CD4-positive, alpha-beta memory T cell (primary cell): ENCODE measurements at regions of chr10 and their contacts with region 1.

Region 1: GRCh38 chr10:124741281-124741921 is 2.8 kb downstream of the FAM53B start:
- DNase-seq: peak; percentile 77 to 82 (median 79)
- H3K4me3 ChIP-seq: peak overlapping the region; percentile 57 to 79
- H3K4me3 Mint-ChIP-seq: peak overlapping the region; percentile 95 to 100 (median 98)
- H3K27ac ChIP-seq: peak overlapping the region; percentile 64
- H3K27ac Mint-ChIP-seq: peak overlapping the region; percentile 87 to 97 (median 96)
- H3K4me1 ChIP-seq: peaks cover 72% of the 10 kb centered on the region
- H3K4me1 Mint-ChIP-seq: peaks cover 60 to 77% (median 69%) of the 10 kb centered on the region in 4 donors
- H3K27me3 ChIP-seq: no peaks in the 10 kb centered on the region
- H3K27me3 Mint-ChIP-seq: no peaks in the 10 kb centered on the region

Region 2: DNA sequence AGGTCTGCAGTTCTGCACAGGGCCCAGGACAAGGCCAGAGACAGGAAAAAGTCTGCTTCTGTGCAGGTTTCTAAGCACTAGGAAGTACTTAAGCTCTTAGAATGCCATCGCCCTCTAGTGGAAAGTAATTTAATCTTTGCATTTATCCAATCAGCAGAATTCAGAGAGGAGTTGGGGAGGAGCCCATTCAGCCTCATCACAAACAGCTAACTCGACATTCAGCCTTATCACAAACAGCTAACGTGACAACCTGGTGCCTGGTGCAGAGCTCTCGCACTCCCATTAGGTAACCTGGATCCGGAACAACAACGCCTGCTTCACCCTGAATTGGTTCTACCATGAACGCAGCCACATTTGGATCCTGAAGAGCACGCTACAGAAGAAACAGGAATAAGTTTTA is 337.9 kb before region 1 on chr10:
- CTCF ChIA-PET with region 1: interaction called, 3 read pairs
- POLR2A ChIA-PET with region 1: no interaction called
- intact Hi-C with region 1: loop called (anchors 5 kb)
- DNase-seq: peak; percentile 54 to 75 (median 68)
- H3K4me3 ChIP-seq: no peak overlapping the region
- H3K4me3 Mint-ChIP-seq: peak overlapping the region in 1 of 8 donors; percentile 45
- H3K27ac ChIP-seq: no peak overlapping the region
- H3K27ac Mint-ChIP-seq: peak overlapping the region; percentile 39 to 90 (median 85)
- H3K4me1 ChIP-seq: peaks cover 7% of the 10 kb centered on the region
- H3K4me1 Mint-ChIP-seq: peaks cover 8 to 11% (median 9%) of the 10 kb centered on the region in 4 donors
- H3K27me3 ChIP-seq: no peaks in the 10 kb centered on the region
- H3K27me3 Mint-ChIP-seq: no peaks in the 10 kb centered on the region

Region 3: DNA sequence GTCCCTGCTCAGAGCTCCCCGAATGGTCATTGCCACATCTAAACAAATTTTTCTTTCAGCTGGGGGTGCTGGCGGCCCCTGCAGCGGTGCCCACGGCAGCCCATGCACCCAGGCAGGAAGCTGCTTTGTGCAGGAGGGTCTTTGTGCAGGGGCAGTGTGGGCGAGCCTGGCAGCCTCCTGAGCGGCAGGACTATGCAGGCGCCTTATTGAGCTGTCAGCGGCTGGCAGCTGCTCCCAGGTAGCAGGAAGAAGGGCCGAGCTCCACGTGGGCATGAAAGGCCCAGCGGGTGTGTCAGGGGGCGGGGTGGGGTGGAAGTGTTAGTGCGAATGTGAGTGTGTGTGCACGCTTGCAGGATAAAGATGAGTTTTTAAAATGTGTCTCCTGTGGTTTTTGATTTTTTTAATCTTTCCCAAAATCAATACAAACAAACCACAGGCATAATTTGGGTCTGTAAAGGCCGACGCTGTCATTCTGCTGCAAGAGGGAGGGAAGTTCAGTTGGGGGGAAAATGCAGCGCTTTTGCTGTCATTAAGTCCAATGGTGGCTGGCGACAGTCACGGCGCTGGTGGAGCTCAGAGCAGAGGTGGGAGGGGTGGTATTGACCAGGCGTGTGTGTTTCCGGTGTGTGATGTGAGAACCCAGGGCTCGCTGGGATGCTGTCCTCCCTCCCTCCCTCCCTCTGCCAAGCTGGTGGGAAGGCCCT is 195.9 kb before region 1 on chr10:
- CTCF ChIA-PET with region 1: interaction called, 256 read pairs
- POLR2A ChIA-PET with region 1: interaction called, 27 read pairs
- intact Hi-C with region 1: loop called (anchors 1 kb)
- DNase-seq: no peak
- H3K4me3 ChIP-seq: no peak overlapping the region
- H3K4me3 Mint-ChIP-seq: peak overlapping the region in 2 of 8 donors; percentile 20 to 46
- H3K27ac ChIP-seq: no peak overlapping the region
- H3K27ac Mint-ChIP-seq: peak overlapping the region in 2 of 7 donors; percentile 22 to 77
- H3K4me1 ChIP-seq: peaks cover 12% of the 10 kb centered on the region
- H3K4me1 Mint-ChIP-seq: peaks cover 3 to 22% (median 9%) of the 10 kb centered on the region in 4 donors
- H3K27me3 ChIP-seq: no peaks in the 10 kb centered on the region
- H3K27me3 Mint-ChIP-seq: no peaks in the 10 kb centered on the region

Region 4: GRCh38 chr10:124632064-124632531 is 109.3 kb before region 1 on chr10:
- CTCF ChIA-PET with region 1: interaction called, 89 read pairs
- POLR2A ChIA-PET with region 1: interaction called, 43 read pairs
- intact Hi-C with region 1: loop called (anchors 1 kb)
- DNase-seq: peak in 1 of 5 donors; percentile 37
- H3K4me3 ChIP-seq: no peak overlapping the region
- H3K4me3 Mint-ChIP-seq: no peak overlapping the region
- H3K27ac ChIP-seq: no peak overlapping the region
- H3K27ac Mint-ChIP-seq: peak overlapping the region in 6 of 7 donors; percentile 13 to 83 (median 62)
- H3K4me1 ChIP-seq: peaks cover 75% of the 10 kb centered on the region
- H3K4me1 Mint-ChIP-seq: peaks cover 45 to 95% (median 65%) of the 10 kb centered on the region in 4 donors
- H3K27me3 ChIP-seq: no peaks in the 10 kb centered on the region
- H3K27me3 Mint-ChIP-seq: no peaks in the 10 kb centered on the region

Region 5: DNA sequence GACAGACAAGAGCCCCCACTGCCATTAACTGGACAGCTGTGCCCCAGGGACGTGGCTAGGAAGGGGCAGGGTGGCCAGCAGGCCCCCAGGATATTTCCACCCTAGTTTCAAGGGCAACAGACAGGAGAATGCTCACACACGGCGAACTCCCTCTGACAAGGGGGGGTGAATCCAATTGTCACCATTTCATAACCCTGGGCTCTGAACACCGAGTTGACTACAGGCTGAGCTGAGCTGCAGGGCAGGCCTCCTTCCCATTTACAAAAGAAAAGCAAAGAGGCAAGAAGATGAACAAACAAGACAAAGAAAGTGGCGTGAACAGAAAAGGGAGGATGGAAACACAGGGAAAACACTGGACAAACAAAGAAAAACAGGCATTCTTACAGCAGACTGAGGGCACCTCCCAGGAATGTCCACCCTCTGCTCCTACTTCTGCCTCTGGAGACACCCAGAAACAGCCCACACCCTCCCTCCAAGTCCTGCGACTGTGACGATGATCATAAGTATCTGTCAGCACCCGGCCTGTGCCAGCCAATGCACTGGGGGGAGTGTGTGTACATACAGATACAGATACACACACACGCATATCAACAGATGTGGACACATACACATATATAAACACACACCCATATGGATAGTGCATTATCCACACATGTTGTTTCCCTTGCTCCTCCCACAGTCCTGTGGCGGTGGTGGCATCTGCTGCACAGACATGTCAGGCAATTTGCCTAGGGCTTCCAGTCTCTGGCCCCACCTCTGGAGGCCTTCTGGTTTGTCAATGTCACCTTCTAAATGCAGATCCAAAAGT is 63.4 kb before region 1 on chr10:
- CTCF ChIA-PET with region 1: interaction called, 36 read pairs
- POLR2A ChIA-PET with region 1: interaction called, 66 read pairs
- intact Hi-C with region 1: loop called (anchors 2 kb)
- DNase-seq: no peak
- H3K4me3 ChIP-seq: peak overlapping the region; percentile 36 to 56
- H3K4me3 Mint-ChIP-seq: peak overlapping the region; percentile 76 to 88 (median 79)
- H3K27ac ChIP-seq: peak overlapping the region; percentile 54
- H3K27ac Mint-ChIP-seq: peak overlapping the region; percentile 85 to 97 (median 92)
- H3K4me1 ChIP-seq: peaks cover 96% of the 10 kb centered on the region
- H3K4me1 Mint-ChIP-seq: peaks cover 70 to 99% (median 89%) of the 10 kb centered on the region in 4 donors
- H3K27me3 ChIP-seq: no peaks in the 10 kb centered on the region
- H3K27me3 Mint-ChIP-seq: no peaks in the 10 kb centered on the region

Region 6: GRCh38 chr10:124719213-124719851 is 22.1 kb before region 1 on chr10:
- CTCF ChIA-PET with region 1: interaction called, 556 read pairs
- POLR2A ChIA-PET with region 1: interaction called, 163 read pairs
- intact Hi-C with region 1: loop called (anchors 1 kb)
- DNase-seq: peak; percentile 81 to 89 (median 84)
- H3K4me3 ChIP-seq: peak overlapping the region in 1 of 2 donors; percentile 19
- H3K4me3 Mint-ChIP-seq: peak overlapping the region; percentile 59 to 83 (median 72)
- H3K27ac ChIP-seq: peak overlapping the region; percentile 81
- H3K27ac Mint-ChIP-seq: peak overlapping the region; percentile 87 to 98 (median 96)
- H3K4me1 ChIP-seq: peaks cover 100% of the 10 kb centered on the region
- H3K4me1 Mint-ChIP-seq: peaks cover 79 to 97% (median 89%) of the 10 kb centered on the region in 4 donors
- H3K27me3 ChIP-seq: no peaks in the 10 kb centered on the region
- H3K27me3 Mint-ChIP-seq: no peaks in the 10 kb centered on the region

Region 7: DNA sequence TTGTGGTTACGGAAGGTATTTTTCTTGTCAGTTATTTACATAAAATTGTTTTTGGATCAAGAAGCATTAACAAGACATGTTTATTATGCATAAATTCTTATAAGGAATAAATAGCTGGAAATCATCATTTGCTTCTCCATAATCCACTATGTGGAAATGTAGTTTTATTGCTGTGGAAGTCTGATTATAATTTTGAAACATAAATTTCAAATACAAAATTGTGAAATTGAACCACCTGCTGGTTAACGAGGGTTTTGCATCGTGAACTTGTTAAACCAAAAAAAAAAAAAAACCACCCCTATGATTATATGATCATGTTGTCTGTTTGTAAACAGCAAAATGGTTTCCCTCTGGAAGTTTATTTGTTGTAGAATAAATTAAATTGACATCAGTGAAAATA is 86.1 kb after region 1 on chr10:
- CTCF ChIA-PET with region 1: interaction called, 10 read pairs
- POLR2A ChIA-PET with region 1: no interaction called
- intact Hi-C with region 1: no loop called
- DNase-seq: peak in 4 of 5 donors; percentile 4 to 14 (median 7)
- H3K4me3 ChIP-seq: no peak overlapping the region
- H3K4me3 Mint-ChIP-seq: no peak overlapping the region
- H3K27ac ChIP-seq: no peak overlapping the region
- H3K27ac Mint-ChIP-seq: no peak overlapping the region
- H3K4me1 ChIP-seq: no peaks in the 10 kb centered on the region
- H3K4me1 Mint-ChIP-seq: no peaks in the 10 kb centered on the region
- H3K27me3 ChIP-seq: no peaks in the 10 kb centered on the region
- H3K27me3 Mint-ChIP-seq: no peaks in the 10 kb centered on the region

Region 8: GRCh38 chr10:125048101-125048864 is 306.9 kb after region 1 on chr10:
- CTCF ChIA-PET with region 1: no interaction called
- POLR2A ChIA-PET with region 1: no interaction called
- intact Hi-C with region 1: no loop called
- DNase-seq: peak in 4 of 5 donors; percentile 18 to 25 (median 24)
- H3K4me3 ChIP-seq: no peak overlapping the region
- H3K4me3 Mint-ChIP-seq: no peak overlapping the region
- H3K27ac ChIP-seq: no peak overlapping the region
- H3K27ac Mint-ChIP-seq: no peak overlapping the region
- H3K4me1 ChIP-seq: no peaks in the 10 kb centered on the region
- H3K4me1 Mint-ChIP-seq: no peaks in the 10 kb centered on the region
- H3K27me3 ChIP-seq: no peaks in the 10 kb centered on the region
- H3K27me3 Mint-ChIP-seq: peaks cover 8 to 11% of the 10 kb centered on the region in 2 donors

Region 9: GRCh38 chr10:125531465-125531864 is 790.1 kb after region 1 on chr10:
- CTCF ChIA-PET with region 1: no interaction called
- POLR2A ChIA-PET with region 1: no interaction called
- intact Hi-C with region 1: no loop called
- DNase-seq: no peak
- H3K4me3 ChIP-seq: no peak overlapping the region
- H3K4me3 Mint-ChIP-seq: no peak overlapping the region
- H3K27ac ChIP-seq: no peak overlapping the region
- H3K27ac Mint-ChIP-seq: no peak overlapping the region
- H3K4me1 ChIP-seq: no peaks in the 10 kb centered on the region
- H3K4me1 Mint-ChIP-seq: no peaks in the 10 kb centered on the region
- H3K27me3 ChIP-seq: no peaks in the 10 kb centered on the region
- H3K27me3 Mint-ChIP-seq: peaks cover 0 to 1% of the 10 kb centered on the region in 2 donors